Activated CD4-positive, alpha-beta memory T cell treated with anti-CD3 and anti-CD28 coated beads for 36 hours (primary cell): ENCODE measurements at regions of chr10 and their contacts with region 1.

Region 1: GRCh38 chr10:32346134-32346550 is 816 bp downstream of the EPC1 start:
- DNase-seq: peak; percentile 97
- H3K4me3 Mint-ChIP-seq: peak overlapping the region; percentile 94
- H3K27ac Mint-ChIP-seq: peak overlapping the region; percentile 99
- H3K4me1 Mint-ChIP-seq: peaks cover 63% of the 10 kb centered on the region
- H3K27me3 Mint-ChIP-seq: no peaks in the 10 kb centered on the region

Region 2: DNA sequence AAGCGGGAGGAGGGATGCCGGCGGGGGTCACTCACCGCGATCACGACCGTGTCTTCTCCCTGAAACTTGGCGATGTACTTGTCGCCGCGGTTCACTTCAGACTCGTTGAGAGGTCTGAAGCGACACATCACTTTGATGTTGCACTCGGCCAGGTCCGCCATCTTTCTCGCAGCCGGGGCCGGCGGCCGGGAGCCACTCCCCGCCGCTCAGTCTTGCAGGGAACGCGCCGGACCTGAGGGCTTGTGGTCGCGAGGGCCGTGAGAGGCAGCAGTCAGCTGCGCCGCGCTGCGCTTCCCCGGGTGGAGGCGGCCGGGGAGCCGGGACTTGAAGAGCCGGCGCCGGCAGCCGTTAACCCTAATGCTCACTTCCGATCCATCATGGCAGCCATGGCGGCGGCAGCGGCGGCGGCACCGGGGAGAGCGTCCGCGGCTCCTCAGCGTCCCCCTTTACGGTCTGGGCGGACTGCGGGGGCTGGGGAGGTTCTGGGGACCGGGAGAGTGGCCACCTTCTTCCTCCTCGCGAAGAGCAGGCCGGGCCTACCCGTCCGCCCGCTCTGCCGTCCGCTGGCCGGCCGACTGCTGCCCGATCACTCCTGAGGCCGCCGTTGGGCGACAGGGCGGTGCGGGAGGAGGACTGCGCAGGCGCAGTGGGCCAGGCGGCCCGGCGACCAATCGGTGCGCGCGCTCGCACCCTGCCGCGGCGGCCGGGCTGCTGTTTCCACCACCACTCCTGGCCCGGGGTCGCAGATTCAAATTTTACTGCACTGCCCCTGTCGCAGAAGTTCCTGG is 290.1 kb before region 1 on chr10 and contains the start of gene KIF5B:
- CTCF ChIA-PET with region 1: interaction called, 3 read pairs
- POLR2A ChIA-PET with region 1: no interaction called
- intact Hi-C with region 1: loop called (anchors 5 kb)
- DNase-seq: peak; percentile 90
- H3K4me3 Mint-ChIP-seq: peak within 1 kb of the TSS; percentile 96
- H3K27ac Mint-ChIP-seq: peak within 1 kb of the TSS; percentile 94
- H3K4me1 Mint-ChIP-seq: peaks cover 37% of the 10 kb centered on the region
- H3K27me3 Mint-ChIP-seq: no peaks in the 10 kb centered on the region
- total RNA-seq, gene KIF5B: 73.9 to 75.2 TPM

Region 3: DNA sequence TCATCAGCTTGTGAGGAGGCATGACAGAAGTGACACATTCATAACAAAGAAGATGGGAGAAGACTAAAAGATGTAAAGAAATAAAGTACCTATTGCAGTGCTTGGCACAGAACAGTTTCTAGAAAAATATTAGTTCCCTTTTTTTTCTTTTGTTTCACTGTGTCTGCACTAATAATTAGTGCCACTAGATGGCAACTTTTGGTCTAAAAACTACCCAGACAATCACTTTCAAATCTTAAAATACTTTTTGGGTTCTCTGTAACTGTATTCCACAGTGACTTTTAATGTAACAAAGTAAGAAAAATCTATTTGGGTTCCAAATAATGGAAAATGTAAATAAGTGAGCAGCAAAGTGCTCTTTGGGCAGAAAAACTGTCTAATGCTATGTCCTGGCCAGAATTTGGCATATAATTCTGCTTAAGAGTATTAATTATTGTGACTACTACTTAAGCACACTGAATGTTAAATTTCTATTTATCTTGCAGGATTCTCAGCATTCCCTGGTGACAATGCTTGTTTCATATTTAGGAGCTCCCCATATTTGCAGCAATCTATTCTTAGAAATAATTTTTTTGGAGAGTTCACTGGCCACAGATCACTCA is 155.2 kb before region 1 on chr10:
- CTCF ChIA-PET with region 1: interaction called, 3 read pairs
- POLR2A ChIA-PET with region 1: no interaction called
- intact Hi-C with region 1: loop called (anchors 1 kb)
- DNase-seq: no peak
- H3K4me3 Mint-ChIP-seq: no peak overlapping the region
- H3K27ac Mint-ChIP-seq: no peak overlapping the region
- H3K4me1 Mint-ChIP-seq: no peaks in the 10 kb centered on the region
- H3K27me3 Mint-ChIP-seq: no peaks in the 10 kb centered on the region

Region 4: GRCh38 chr10:32256613-32257437 is 89.3 kb before region 1 on chr10:
- CTCF ChIA-PET with region 1: interaction called, 33 read pairs
- POLR2A ChIA-PET with region 1: interaction called, 4 read pairs
- intact Hi-C with region 1: loop called (anchors 1 kb)
- DNase-seq: peak; percentile 81
- H3K4me3 Mint-ChIP-seq: no peak overlapping the region
- H3K27ac Mint-ChIP-seq: no peak overlapping the region
- H3K4me1 Mint-ChIP-seq: peaks cover 15% of the 10 kb centered on the region
- H3K27me3 Mint-ChIP-seq: no peaks in the 10 kb centered on the region

Region 5: DNA sequence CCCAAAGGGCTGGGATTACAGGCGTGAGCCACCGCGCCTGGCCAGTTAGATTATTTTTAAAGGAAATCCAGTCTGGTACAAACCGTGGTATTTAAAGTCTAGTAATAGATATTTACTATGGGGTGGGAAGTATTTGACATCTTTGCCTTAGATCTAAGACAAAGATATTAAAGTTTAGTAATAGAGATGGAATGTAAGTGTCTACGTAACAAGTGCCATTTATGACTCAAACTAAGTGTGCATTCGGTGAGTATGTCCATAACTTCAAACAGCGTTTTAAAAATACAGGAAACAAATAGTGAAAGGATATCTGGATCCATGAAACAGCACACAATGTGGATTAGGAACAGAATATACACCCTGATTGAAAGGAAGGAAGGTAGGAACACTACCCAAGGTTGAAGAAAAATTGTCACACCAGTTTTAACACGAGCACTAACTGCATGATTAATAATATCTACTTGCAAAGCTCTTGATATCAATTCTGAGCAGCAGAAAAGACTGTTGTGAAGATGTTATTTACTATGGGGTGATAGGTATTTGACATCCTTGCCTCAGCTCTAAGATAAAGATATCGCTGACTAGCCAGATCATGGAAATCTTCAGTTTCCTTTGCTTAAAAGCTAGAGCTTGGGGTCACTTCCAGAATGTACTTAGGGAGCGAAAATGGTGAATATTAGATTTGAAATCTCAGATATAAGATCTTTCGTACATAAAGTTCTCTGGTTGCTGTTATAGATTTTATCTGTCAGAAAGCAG is 47.9 kb before region 1 on chr10:
- CTCF ChIA-PET with region 1: interaction called, 5 read pairs
- POLR2A ChIA-PET with region 1: interaction called, 5 read pairs
- intact Hi-C with region 1: loop called (anchors 2 kb)
- DNase-seq: no peak
- H3K4me3 Mint-ChIP-seq: peak overlapping the region; percentile 69
- H3K27ac Mint-ChIP-seq: peak overlapping the region; percentile 90
- H3K4me1 Mint-ChIP-seq: peaks cover 62% of the 10 kb centered on the region
- H3K27me3 Mint-ChIP-seq: no peaks in the 10 kb centered on the region

Region 6: GRCh38 chr10:32332299-32332750 is 13.8 kb before region 1 on chr10:
- CTCF ChIA-PET with region 1: interaction called, 43 read pairs
- POLR2A ChIA-PET with region 1: interaction called, 35 read pairs
- intact Hi-C with region 1: loop called (anchors 1 kb)
- DNase-seq: peak; percentile 90
- H3K4me3 Mint-ChIP-seq: peak overlapping the region; percentile 75
- H3K27ac Mint-ChIP-seq: peak overlapping the region; percentile 91
- H3K4me1 Mint-ChIP-seq: peaks cover 93% of the 10 kb centered on the region
- H3K27me3 Mint-ChIP-seq: no peaks in the 10 kb centered on the region

Region 7: GRCh38 chr10:32367793-32368453 is 21.8 kb after region 1 on chr10:
- CTCF ChIA-PET with region 1: interaction called, 15 read pairs
- POLR2A ChIA-PET with region 1: interaction called, 4 read pairs
- intact Hi-C with region 1: loop called (anchors 1 kb)
- DNase-seq: peak; percentile 83
- H3K4me3 Mint-ChIP-seq: peak overlapping the region; percentile 39
- H3K27ac Mint-ChIP-seq: peak overlapping the region; percentile 42
- H3K4me1 Mint-ChIP-seq: peaks cover 64% of the 10 kb centered on the region
- H3K27me3 Mint-ChIP-seq: no peaks in the 10 kb centered on the region